ENCODE measurements at regions of chr16 and their contacts with region 1.

Region 1: DNA sequence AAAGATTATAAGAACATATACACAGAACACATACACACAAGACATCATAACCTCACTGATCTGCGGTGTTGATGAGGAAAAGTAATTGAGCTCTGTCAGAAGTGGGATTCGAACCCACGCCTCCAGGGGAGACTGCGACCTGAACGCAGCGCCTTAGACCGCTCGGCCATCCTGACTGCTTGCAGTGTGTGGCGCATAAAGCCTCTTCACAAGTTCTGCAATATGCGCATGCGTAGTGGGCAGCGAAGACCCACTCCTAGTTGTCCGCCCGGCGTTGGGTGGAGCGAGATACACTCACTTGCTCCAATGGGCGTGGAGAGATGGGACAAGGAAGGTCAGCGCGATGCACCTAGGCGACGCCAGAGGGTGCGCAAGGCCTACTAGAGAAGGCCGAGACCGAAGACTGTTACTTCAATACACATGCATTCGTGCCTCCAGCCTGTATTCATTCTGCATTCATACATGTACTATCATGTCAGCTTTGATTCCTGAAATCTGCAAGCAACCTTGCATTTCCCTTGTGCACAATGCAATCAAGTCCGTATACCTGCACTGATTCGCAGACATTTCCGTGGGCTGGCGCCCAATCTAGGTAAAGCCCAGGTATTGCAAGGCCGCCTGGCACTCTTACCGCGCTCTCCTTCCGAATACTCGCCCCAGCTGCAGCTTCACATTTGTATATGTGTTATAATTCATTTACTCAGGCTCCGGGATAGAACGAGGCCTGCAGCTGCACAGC is 16.1 kb upstream of the PLLP start:
- DNase-seq: peak; percentile 100
- H3K4me3 ChIP-seq: peak overlapping the region in 2 of 3 experiments; percentile 31 to 47
- H3K27ac ChIP-seq: peak overlapping the region; percentile 35
- H3K4me1 ChIP-seq: peaks cover 17% of the 10 kb centered on the region
- H3K27me3 ChIP-seq: no peaks in the 10 kb centered on the region
- CTCF ChIP-seq: peak; percentile 97 to 99
- POLR2A ChIP-seq: peak; percentile 32

Region 2: GRCh38 chr16:57084257-57084770 is 216.2 kb before region 1 on chr16:
- CTCF ChIA-PET with region 1: interaction called, 9 read pairs
- POLR2A ChIA-PET with region 1: no interaction called
- dilution Hi-C with region 1: no loop called
- intact Hi-C with region 1: loop called (anchors 1 kb)
- DNase-seq: peak; percentile 79
- H3K4me3 ChIP-seq: no peak overlapping the region
- H3K27ac ChIP-seq: no peak overlapping the region
- H3K4me1 ChIP-seq: no peaks in the 10 kb centered on the region
- H3K27me3 ChIP-seq: no peaks in the 10 kb centered on the region
- CTCF ChIP-seq: peak; percentile 95 to 98
- POLR2A ChIP-seq: no peak

Region 3: DNA sequence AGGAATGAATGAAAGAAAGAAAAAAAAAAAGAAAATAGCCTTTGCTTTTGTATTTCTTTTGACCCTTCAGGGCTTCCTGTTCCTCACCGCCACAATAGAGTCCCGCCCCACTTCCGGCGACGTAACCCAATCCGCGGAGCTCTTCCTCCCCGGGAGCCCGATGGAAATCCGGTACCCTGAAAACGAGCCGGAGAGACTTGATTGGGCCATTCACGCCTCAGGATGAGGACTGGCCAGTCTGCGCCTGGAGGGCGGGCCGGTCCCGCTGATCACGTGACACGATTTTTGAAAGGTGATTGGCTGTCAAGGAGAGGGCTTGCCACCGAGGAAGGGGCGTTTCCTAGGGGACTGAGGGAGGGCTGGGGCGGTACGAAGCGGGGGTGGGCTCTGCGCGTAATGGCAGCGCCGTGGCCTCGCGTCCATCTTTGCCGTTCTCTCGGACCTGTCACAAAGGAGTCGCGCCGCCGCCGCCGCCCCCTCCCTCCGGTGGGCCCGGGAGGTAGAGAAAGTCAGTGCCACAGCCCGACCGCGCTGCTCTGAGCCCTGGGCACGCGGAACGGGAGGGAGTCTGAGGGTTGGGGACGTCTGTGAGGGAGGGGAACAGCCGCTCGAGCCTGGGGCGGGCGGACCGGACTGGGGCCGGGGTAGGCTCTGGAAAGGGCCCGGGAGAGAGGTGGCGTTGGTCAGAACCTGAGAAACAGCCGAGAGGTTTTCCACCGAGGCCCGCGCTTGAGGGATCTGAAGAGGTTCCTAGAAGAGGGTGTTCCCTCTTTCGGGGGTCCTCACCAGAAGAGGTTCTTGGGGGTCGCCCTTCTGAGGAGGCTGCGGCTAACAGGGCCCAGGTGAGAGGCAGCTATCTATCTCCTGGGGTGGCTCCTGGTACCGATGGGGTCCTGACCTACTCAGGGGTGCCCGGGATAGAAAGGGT is 114.3 kb before region 1 on chr16 and contains the starts of genes PSME3IP1 and RSPRY1:
- CTCF ChIA-PET with region 1: interaction called, 10 read pairs
- POLR2A ChIA-PET with region 1: no interaction called
- dilution Hi-C with region 1: no loop called
- intact Hi-C with region 1: loop called (anchors 1 kb)
- DNase-seq: peak; percentile 100
- H3K4me3 ChIP-seq: peak within 1 kb of the TSS; percentile 88 to 95 (median 89)
- H3K27ac ChIP-seq: peak within 1 kb of the TSS; percentile 89
- H3K4me1 ChIP-seq: peaks cover 34% of the 10 kb centered on the region
- H3K27me3 ChIP-seq: no peaks in the 10 kb centered on the region
- CTCF ChIP-seq: no peak
- POLR2A ChIP-seq: peak; percentile 85
- total RNA-seq, gene PSME3IP1: 91.8 and 98.2 TPM in 2 replicates
- total RNA-seq, gene RSPRY1: 55.1 and 55.8 TPM in 2 replicates

Region 4: DNA sequence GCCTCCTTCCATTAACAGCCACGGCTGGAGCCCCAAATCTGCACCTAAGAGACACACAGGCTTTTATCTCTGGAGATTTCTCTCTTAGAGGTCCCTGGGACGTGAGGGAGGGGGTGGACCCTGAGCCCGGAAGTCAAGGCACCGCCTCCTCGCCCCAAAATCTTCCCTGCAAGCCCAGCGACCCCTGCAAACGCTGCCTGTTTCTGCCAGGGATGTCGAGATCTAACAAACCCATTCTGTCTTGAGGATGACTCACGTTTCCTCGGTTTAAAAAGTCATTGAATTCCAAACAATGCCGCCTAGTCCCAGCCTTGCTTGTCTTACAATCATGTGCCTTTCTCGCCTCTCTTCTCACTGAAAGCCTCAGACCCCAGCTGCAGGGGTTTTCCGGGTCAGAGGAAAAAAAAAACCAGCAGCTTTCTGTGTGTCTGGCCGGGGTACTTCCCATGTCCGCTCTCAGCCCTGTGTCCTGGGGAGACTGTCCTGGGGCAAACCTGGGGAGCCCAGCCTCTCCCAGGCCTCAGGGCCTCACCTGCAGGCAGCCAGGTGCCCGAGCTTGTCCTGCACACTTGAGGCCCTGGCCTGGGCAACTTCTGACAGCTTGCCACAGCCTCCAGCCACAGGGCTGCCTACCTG is 40.1 kb before region 1 on chr16:
- CTCF ChIA-PET with region 1: interaction called, 8 read pairs
- POLR2A ChIA-PET with region 1: no interaction called
- dilution Hi-C with region 1: no loop called
- intact Hi-C with region 1: loop called (anchors 1 kb)
- DNase-seq: peak; percentile 98
- H3K4me3 ChIP-seq: no peak overlapping the region
- H3K27ac ChIP-seq: peak overlapping the region; percentile 92
- H3K4me1 ChIP-seq: peaks cover 23% of the 10 kb centered on the region
- H3K27me3 ChIP-seq: no peaks in the 10 kb centered on the region
- CTCF ChIP-seq: no peak
- POLR2A ChIP-seq: peak; percentile 51

Region 5: GRCh38 chr16:57316390-57317017 is 15.9 kb after region 1 on chr16:
- CTCF ChIA-PET with region 1: interaction called, 9 read pairs
- POLR2A ChIA-PET with region 1: no interaction called
- dilution Hi-C with region 1: no loop called
- intact Hi-C with region 1: loop called (anchors 1 kb)
- DNase-seq: peak; percentile 98
- H3K4me3 ChIP-seq: no peak overlapping the region
- H3K27ac ChIP-seq: peak overlapping the region; percentile 85
- H3K4me1 ChIP-seq: peaks cover 33% of the 10 kb centered on the region
- H3K27me3 ChIP-seq: no peaks in the 10 kb centered on the region
- CTCF ChIP-seq: no peak
- POLR2A ChIP-seq: peak; percentile 47

Region 6: DNA sequence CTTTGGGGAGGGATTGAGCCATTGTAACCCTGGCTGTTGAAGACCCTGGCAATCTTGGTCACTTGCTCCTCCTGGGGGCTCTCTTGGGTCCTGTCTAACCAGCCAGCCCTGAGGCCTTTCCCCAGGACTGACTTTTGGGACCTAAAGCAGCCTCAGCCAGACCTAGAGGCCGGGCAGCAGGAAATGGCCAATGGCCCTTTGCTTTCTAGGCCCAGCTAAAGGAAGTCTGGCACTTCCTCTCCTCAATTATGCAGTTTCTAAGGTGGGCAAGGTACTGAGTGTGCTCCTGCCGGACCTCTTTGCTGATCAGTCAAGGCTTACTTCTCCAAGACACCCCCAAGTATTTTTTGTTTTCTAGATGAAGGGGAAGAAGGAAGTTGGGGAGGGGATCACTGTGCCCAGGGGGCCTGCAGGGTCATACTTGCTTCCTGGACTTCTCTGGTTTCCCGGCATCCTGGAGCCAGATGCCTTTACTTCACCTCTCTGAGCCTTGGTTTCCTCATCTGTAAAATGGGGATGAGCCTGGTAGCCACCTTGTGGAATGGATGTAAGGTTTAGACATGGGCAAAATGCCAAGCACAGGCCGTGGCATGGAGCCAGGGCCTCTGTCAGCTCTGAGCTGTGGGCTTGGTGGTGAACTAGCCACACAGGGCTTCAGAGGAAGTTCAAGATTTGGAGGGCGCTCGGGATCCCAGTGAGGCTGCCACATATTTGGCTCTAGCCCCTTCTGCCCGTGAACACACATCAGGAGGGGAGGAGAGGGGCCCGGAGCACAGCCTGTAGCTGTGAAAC is 80.3 kb after region 1 on chr16:
- CTCF ChIA-PET with region 1: interaction called, 16 read pairs
- POLR2A ChIA-PET with region 1: no interaction called
- dilution Hi-C with region 1: no loop called
- intact Hi-C with region 1: loop called (anchors 1 kb)
- DNase-seq: peak; percentile 68
- H3K4me3 ChIP-seq: no peak overlapping the region
- H3K27ac ChIP-seq: no peak overlapping the region
- H3K4me1 ChIP-seq: peaks cover 12% of the 10 kb centered on the region
- H3K27me3 ChIP-seq: no peaks in the 10 kb centered on the region
- CTCF ChIP-seq: no peak
- POLR2A ChIP-seq: no peak

Region 7: DNA sequence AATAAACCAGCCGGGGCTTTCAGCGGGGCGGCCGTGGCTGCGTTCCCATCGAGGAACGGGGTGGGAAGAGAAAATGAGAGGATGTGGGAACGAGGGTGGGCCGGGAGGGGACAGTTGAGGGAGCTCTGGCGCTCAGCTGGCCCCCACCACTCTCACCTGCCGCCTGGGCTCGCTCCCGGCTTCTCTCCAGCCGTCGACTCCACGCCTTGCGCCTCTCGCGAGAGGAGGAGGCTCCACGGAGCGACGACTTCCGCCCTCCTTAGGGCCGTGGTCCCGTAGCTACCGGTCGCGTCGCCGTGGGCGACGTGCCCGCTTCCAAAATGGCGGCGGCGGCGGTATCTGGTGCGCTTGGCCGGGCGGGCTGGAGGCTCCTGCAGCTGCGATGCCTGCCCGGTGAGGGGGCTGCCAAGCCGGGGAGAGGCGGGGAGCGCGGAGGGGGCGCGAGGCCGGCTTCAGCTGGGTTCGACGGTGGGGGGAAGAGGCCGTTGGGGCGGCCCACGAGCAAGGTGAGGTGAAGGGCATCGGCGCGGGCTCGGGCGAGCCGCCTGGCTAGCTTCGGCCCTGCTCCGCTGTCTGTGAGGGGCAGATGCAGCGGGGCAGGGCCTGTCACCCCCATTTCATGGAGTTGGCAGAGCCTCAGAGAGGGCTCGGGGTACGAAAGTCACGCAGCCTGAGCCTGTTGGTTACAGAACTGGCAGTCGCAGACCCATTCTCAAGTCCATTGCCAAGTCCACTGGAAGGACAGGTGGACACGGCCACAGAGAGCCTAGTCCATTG is 146.8 kb after region 1 on chr16 and contains the starts of genes CIAPIN1 and COQ9:
- CTCF ChIA-PET with region 1: interaction called, 6 read pairs
- POLR2A ChIA-PET with region 1: no interaction called
- dilution Hi-C with region 1: no loop called
- intact Hi-C with region 1: loop called (anchors 1 kb)
- DNase-seq: peak; percentile 92
- H3K4me3 ChIP-seq: peak within 1 kb of the TSS; percentile 43 to 93 (median 78)
- H3K27ac ChIP-seq: peak within 1 kb of the TSS; percentile 56
- H3K4me1 ChIP-seq: peaks cover 12% of the 10 kb centered on the region
- H3K27me3 ChIP-seq: no peaks in the 10 kb centered on the region
- CTCF ChIP-seq: no peak
- POLR2A ChIP-seq: peak; percentile 94
- total RNA-seq, gene CIAPIN1: 70.9 and 77.9 TPM in 2 replicates
- total RNA-seq, gene COQ9: 42.1 and 42.5 TPM in 2 replicates

Region 8: GRCh38 chr16:57485916-57486857 is 185.6 kb after region 1 on chr16 and contains the start of gene DOK4:
- CTCF ChIA-PET with region 1: no interaction called
- POLR2A ChIA-PET with region 1: no interaction called
- dilution Hi-C with region 1: no loop called
- intact Hi-C with region 1: no loop called
- DNase-seq: peak; percentile 36
- H3K4me3 ChIP-seq: peak within 1 kb of the TSS; percentile 49 to 72 (median 51)
- H3K27ac ChIP-seq: no peak within 1 kb of the TSS
- H3K4me1 ChIP-seq: peaks cover 6% of the 10 kb centered on the region
- H3K27me3 ChIP-seq: peaks cover 0 to 4% of the 10 kb centered on the region in 2 experiments
- CTCF ChIP-seq: no peak
- POLR2A ChIP-seq: no peak
- total RNA-seq, gene DOK4: 22.3 and 24.4 TPM in 2 replicates